Activated CD4-positive, alpha-beta T cell treated with anti-CD3 and anti-CD28 coated beads for 36 hours (primary cell): ENCODE measurements at regions of chr1 and their contacts with region 1.

Region 1: DNA sequence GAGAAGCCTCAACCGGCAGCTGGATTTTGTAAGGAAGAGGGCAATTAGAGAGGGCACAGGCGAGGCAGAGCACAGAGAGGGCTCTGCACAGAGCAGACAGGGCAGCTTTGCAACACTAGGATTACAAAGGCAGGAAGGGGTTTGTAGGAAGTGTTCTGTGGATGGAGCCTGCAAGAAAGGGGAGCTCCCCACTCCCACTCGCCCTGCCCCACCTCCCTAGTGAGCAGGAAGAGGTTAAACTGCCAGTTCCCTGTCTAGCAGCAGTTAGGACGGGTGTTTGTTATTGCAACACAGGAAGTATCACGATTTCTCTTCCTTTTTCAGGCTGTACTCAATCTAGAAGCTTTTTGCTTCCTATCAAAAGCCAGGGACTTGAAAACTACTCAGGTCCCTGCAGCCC is 63.3 kb upstream of the LRRC8D start:
- DNase-seq: peak; percentile 84
- ATAC-seq: peak; percentile 88
- H3K4me3 Mint-ChIP-seq: peak overlapping the region; percentile 54
- H3K27ac Mint-ChIP-seq: peak overlapping the region; percentile 85
- H3K4me1 Mint-ChIP-seq: peaks cover 84% of the 10 kb centered on the region
- H3K27me3 Mint-ChIP-seq: no peaks in the 10 kb centered on the region

Region 2: DNA sequence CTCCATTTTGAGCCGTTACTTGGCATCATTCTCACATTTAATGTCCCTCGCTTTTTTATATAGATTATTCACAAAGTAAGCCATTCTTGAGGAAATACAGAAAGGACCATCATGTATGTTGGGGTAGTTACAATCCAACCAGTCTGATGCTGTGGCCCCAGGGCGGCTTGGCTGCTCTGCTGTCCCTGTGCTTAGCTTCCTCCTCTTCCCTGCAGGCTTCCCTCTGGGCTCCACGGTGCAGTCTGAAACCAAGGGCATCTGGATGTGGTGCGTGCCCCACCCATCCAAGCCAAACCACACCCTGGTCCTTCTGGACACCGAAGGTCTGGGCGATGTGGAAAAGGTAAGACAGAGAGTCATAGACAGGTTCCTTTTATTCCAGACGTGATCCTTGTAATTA is 388.2 kb before region 1 on chr1:
- CTCF ChIA-PET with region 1: no interaction called
- POLR2A ChIA-PET with region 1: no interaction called
- intact Hi-C with region 1: no loop called
- DNase-seq: no peak
- ATAC-seq: no peak
- H3K4me3 Mint-ChIP-seq: no peak overlapping the region
- H3K27ac Mint-ChIP-seq: no peak overlapping the region
- H3K4me1 Mint-ChIP-seq: no peaks in the 10 kb centered on the region
- H3K27me3 Mint-ChIP-seq: no peaks in the 10 kb centered on the region

Region 3: GRCh38 chr1:89739013-89739843 is 18.3 kb before region 1 on chr1:
- CTCF ChIA-PET with region 1: interaction called, 21 read pairs
- POLR2A ChIA-PET with region 1: interaction called, 3 read pairs
- intact Hi-C with region 1: loop called in 1 of 2 experiments (anchors 1 kb)
- DNase-seq: peak; percentile 76
- ATAC-seq: peak; percentile 94
- H3K4me3 Mint-ChIP-seq: peak overlapping the region; percentile 55
- H3K27ac Mint-ChIP-seq: peak overlapping the region; percentile 78
- H3K4me1 Mint-ChIP-seq: peaks cover 40% of the 10 kb centered on the region
- H3K27me3 Mint-ChIP-seq: no peaks in the 10 kb centered on the region